Activated B cell treated with CpG ODN at 0.5 μM for 24 hours (primary cell): ENCODE measurements at regions of chr19 and their contacts with region 1.

Region 1: GRCh38 chr19:48255376-48256303 is at the start of gene CARD8:
- DNase-seq: peak; percentile 73
- ATAC-seq: peak; percentile 80
- H3K4me3 Mint-ChIP-seq: peak within 1 kb of the TSS; percentile 99
- H3K27ac Mint-ChIP-seq: peak within 1 kb of the TSS; percentile 100
- H3K4me1 Mint-ChIP-seq: peaks cover 62% of the 10 kb centered on the region
- H3K27me3 Mint-ChIP-seq: no peaks in the 10 kb centered on the region
- CTCF ChIP-seq: no peak
- total RNA-seq, gene CARD8: 103 and 109 TPM in 2 replicates

Region 2: DNA sequence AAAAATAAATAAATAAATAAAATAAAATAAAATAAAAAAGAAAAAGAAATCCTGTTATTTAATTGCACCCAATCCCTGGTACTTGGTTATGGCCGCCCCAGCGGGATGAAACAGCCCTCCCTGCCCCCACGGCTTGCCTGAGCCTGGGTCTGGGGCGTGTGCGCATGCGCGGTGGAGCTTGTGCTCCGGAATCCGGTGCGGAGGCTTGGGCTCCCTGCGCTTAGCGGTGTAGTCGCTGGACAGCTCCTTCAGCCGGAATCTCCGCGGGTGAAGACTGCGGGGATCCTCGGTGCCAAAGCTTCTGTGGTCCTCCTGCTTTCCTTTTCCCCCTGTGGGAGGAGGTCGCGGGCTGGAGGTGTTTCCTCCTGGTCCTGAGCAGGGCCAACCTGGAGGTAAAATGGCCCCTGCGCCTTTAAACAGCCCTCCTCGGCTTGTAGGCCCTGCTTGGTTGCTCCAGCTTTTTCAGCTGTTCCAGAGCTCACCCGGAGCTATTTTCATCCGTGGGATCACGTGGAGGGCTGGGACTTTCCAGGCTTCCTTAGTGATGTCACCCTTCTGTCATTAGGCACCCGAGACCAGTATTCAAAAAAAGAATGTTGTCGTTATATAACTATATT is 145.2 kb before region 1 on chr19 and contains the start of gene PLA2G4C:
- CTCF ChIA-PET with region 1: interaction called, 41 read pairs
- POLR2A ChIA-PET with region 1: interaction called, 7 read pairs
- intact Hi-C with region 1: loop called (anchors 1 kb)
- DNase-seq: peak; percentile 77
- ATAC-seq: peak; percentile 85
- H3K4me3 Mint-ChIP-seq: peak within 1 kb of the TSS; percentile 86
- H3K27ac Mint-ChIP-seq: peak within 1 kb of the TSS; percentile 88
- H3K4me1 Mint-ChIP-seq: peaks cover 16% of the 10 kb centered on the region
- H3K27me3 Mint-ChIP-seq: no peaks in the 10 kb centered on the region
- CTCF ChIP-seq: no peak
- total RNA-seq, gene PLA2G4C: 14.9 and 16.6 TPM in 2 replicates

Region 3: DNA sequence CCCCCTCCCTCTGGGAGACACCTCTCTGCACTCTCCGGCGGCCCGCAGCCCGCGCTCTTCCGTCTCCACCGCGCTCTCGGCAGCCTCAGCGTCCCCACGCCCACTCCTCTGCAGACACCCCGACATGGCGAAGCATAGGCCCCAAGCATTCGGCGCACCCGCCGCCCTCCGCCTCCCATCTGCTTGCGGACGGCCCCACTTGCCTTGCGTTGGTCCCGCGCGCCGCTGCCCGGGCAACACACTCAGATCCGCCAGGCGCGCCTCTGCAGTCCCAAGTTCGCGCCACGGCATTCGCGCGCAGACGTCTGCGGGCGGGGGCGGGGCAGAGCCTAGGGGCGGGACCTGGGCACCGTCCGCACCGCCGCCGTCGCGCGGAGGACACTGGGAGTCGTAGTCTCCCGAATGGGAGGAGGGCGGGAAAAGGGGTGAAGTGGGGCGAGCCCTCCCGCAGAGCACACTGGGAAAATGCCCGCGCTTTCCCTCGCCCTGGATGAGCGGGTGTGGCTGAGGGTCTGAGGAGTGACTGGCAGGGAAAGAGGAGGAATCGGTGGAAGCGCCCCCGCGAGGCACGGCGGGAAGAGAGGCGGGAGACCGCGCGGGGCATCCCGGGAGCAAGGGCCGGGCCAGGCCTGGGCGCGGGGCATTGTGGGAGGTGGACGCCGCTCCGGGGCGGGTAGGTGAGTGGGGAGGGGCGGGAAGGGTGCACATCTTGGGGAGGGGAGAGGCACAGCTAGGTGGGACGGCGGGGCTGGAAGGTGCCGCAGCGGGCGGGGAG is 85.4 kb before region 1 on chr19 and contains the starts of genes LIG1 and ZSWIM9:
- CTCF ChIA-PET with region 1: no interaction called
- POLR2A ChIA-PET with region 1: interaction called, 32 read pairs
- intact Hi-C with region 1: loop called (anchors 1 kb)
- DNase-seq: peak; percentile 93
- ATAC-seq: peak; percentile 83
- H3K4me3 Mint-ChIP-seq: peak within 1 kb of the TSS; percentile 100
- H3K27ac Mint-ChIP-seq: peak within 1 kb of the TSS; percentile 99
- H3K4me1 Mint-ChIP-seq: peaks cover 21% of the 10 kb centered on the region
- H3K27me3 Mint-ChIP-seq: no peaks in the 10 kb centered on the region
- CTCF ChIP-seq: no peak
- total RNA-seq, gene LIG1: 41.8 and 42.9 TPM in 2 replicates
- total RNA-seq, gene ZSWIM9: 5.7 and 8.6 TPM in 2 replicates

Region 4: DNA sequence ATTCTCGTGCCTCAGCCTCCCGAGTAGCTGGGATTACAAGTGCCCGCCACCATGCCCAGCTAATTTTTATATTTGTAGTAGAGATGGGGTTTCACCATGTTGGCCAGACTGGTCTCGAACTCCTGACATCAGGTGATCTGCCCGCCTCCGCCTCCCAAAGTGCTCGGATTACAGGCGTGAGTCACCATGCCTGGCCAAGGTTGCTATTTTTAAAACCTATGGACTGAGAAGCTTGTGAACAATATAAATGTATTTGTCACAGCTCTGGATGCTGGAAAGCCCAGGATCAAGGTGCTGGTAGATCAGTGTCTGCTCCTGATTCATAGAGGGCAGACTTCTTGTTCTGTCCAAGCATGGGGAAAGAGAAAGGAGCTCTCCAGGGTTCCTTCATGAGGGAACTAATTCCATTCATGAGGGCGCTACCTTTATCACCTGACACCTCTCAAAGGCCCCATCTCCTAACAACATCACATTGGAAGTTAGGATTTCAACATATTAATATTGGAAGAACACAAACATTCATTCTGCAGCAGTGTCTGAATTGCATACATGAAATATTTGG is 16.0 kb before region 1 on chr19:
- CTCF ChIA-PET with region 1: interaction called, 3 read pairs
- POLR2A ChIA-PET with region 1: interaction called, 9 read pairs
- intact Hi-C with region 1: loop called (anchors 2 kb)
- DNase-seq: no peak
- ATAC-seq: no peak
- H3K4me3 Mint-ChIP-seq: no peak overlapping the region
- H3K27ac Mint-ChIP-seq: no peak overlapping the region
- H3K4me1 Mint-ChIP-seq: peaks cover 25% of the 10 kb centered on the region
- H3K27me3 Mint-ChIP-seq: no peaks in the 10 kb centered on the region
- CTCF ChIP-seq: no peak

Region 5: DNA sequence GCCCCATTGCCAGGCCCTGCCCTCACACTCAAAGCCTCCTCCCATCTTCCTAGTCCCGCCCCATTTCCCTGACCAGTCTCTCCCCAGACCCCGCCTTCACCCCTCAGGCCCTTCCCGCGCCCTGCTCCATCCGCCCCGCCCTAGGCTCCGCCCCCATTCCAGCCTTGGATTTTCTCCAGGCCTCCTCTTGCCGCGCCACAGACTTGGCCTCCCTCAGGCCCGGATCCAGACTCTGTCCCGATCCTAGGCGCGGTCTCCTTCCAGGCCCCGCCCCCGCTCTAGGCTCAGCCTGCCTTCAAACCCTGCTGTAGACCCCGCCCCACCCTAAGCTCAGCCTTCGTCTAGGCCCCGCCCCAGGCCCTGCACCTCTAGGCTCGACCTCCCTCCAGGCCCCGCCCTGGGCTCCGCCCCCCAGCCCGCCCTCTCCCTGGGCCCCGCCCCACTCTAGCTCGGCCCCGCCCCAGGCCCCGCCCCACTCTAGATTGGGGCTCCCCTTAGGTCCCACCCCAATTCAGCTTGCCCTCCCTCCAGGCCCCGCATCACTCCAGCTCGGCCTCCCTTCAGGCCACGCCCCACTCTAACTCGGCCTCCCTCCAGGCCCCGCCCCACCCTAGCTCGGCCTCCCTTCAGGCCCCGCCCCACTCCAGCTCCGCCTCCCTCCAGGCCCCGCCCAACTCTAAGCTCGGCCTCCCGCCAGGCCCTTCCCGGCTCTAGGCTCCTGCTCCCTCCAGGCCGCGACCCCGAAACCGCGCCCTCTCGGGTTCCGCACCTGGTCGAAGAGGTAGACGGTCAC is 237.5 kb after region 1 on chr19:
- CTCF ChIA-PET with region 1: no interaction called
- POLR2A ChIA-PET with region 1: no interaction called
- intact Hi-C with region 1: loop called (anchors 10 kb)
- DNase-seq: peak; percentile 71
- ATAC-seq: peak; percentile 69
- H3K4me3 Mint-ChIP-seq: peak overlapping the region; percentile 74
- H3K27ac Mint-ChIP-seq: no peak overlapping the region
- H3K4me1 Mint-ChIP-seq: peaks cover 42% of the 10 kb centered on the region
- H3K27me3 Mint-ChIP-seq: peaks cover 33% of the 10 kb centered on the region
- CTCF ChIP-seq: no peak